CD4-positive, alpha-beta memory T cell (primary cell): ENCODE measurements at regions of chr7 and their contacts with region 1.

Region 1: GRCh38 chr7:136009488-136010079 is 32.4 kb upstream of the MTPN start:
- DNase-seq: peak in 4 of 5 donors; percentile 29 to 59 (median 50)
- H3K4me3 ChIP-seq: no peak overlapping the region
- H3K4me3 Mint-ChIP-seq: no peak overlapping the region
- H3K27ac ChIP-seq: no peak overlapping the region
- H3K27ac Mint-ChIP-seq: no peak overlapping the region
- H3K4me1 ChIP-seq: peaks cover 7% of the 10 kb centered on the region
- H3K4me1 Mint-ChIP-seq: peaks cover 0 to 8% (median 6%) of the 10 kb centered on the region in 4 donors
- H3K27me3 ChIP-seq: no peaks in the 10 kb centered on the region
- H3K27me3 Mint-ChIP-seq: no peaks in the 10 kb centered on the region

Region 2: DNA sequence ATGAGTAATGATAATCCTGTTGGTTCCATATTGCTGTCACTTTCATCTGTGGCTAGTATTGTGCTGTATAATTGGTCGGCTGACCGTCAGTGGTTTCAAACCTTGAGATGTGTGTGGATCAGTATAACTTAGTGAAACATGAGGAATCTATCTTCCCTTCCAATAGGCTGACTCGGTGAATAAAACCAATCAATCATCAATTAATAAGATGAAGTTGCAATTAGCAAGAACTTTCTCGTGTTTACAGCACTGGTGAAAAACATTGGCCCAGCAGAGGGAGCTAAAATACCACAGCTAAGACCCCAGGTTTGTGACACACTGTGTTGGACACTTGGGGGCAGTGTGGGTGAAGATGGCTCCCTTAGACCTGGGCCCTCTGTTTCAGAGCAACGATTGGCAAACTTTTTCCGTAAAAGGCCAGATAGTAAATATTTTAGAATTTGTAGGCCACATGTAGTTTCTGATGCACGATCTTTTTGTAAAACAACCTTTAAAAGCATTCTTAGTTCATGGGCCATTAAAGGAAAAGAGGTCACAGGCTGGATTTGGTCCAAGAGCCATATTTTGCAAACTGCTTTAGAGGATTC is 728.1 kb before region 1 on chr7:
- CTCF ChIA-PET with region 1: no interaction called
- POLR2A ChIA-PET with region 1: no interaction called
- intact Hi-C with region 1: loop called (anchors 2 kb)
- DNase-seq: peak; percentile 77 to 79 (median 78)
- H3K4me3 ChIP-seq: no peak overlapping the region
- H3K4me3 Mint-ChIP-seq: peak overlapping the region in 6 of 8 donors; percentile 16 to 72 (median 36)
- H3K27ac ChIP-seq: no peak overlapping the region
- H3K27ac Mint-ChIP-seq: peak overlapping the region in 4 of 7 donors; percentile 59 to 85 (median 72)
- H3K4me1 ChIP-seq: peaks cover 21% of the 10 kb centered on the region
- H3K4me1 Mint-ChIP-seq: peaks cover 15 to 24% (median 21%) of the 10 kb centered on the region in 4 donors
- H3K27me3 ChIP-seq: no peaks in the 10 kb centered on the region
- H3K27me3 Mint-ChIP-seq: peaks cover 5 to 8% of the 10 kb centered on the region in 2 donors

Region 3: DNA sequence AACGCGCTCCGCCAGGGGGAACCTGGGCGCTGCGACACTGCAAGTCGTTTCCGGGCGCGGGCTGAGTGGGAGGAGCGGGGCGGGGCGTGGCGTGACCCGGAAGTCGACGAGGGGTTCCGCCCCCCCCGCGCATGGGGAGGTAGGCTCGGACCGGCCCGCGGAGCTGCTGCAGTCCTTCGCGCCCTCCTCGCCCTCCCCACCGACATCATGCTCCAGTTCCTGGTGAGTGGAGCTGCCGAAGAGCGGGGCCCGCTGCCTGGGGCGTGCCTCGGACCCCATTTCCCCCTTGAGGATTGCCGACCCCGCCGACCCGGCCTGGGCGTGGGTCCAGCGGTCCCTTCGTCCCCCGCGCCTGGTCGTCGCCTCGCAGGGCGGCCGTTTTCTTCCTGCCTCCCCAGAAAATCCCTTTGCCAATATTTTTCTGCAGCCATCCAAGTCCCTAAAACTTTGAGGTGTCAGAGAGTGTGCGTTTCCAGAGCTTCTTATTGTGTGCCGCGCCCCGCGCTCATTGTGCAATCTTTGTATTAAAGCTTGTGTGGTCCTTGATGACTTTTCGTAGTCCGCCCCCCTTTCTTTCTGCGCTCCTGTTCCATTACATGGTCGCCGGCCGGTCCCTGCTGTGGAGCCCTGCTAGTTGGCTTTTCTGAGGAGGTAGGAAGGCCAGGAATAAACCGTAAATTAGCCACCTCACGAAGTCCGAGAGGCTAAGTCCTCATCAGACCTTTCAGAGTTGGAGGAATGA is 347.0 kb before region 1 on chr7 and contains the start of gene STMP1:
- CTCF ChIA-PET with region 1: interaction called, 4 read pairs
- POLR2A ChIA-PET with region 1: no interaction called
- intact Hi-C with region 1: loop called (anchors 5 kb)
- DNase-seq: peak; percentile 92 to 94 (median 93)
- H3K4me3 ChIP-seq: peak within 1 kb of the TSS; percentile 86 to 98
- H3K4me3 Mint-ChIP-seq: peak within 1 kb of the TSS; percentile 91 to 98 (median 96)
- H3K27ac ChIP-seq: peak within 1 kb of the TSS; percentile 76
- H3K27ac Mint-ChIP-seq: peak within 1 kb of the TSS; percentile 83 to 98 (median 95)
- H3K4me1 ChIP-seq: peaks cover 30% of the 10 kb centered on the region
- H3K4me1 Mint-ChIP-seq: peaks cover 25 to 52% (median 38%) of the 10 kb centered on the region in 4 donors
- H3K27me3 ChIP-seq: no peaks in the 10 kb centered on the region
- H3K27me3 Mint-ChIP-seq: no peaks in the 10 kb centered on the region
- total RNA-seq, gene STMP1: 29.5 to 29.7 TPM

Region 4: GRCh38 chr7:135801045-135801693 is 208.4 kb before region 1 on chr7:
- CTCF ChIA-PET with region 1: interaction called, 187 read pairs
- POLR2A ChIA-PET with region 1: interaction called, 3 read pairs
- intact Hi-C with region 1: loop called (anchors 1 kb)
- DNase-seq: peak; percentile 50 to 69 (median 66)
- H3K4me3 ChIP-seq: no peak overlapping the region
- H3K4me3 Mint-ChIP-seq: peak overlapping the region in 5 of 8 donors; percentile 36 to 75 (median 50)
- H3K27ac ChIP-seq: no peak overlapping the region
- H3K27ac Mint-ChIP-seq: peak overlapping the region in 1 of 7 donors; percentile 76
- H3K4me1 ChIP-seq: peaks cover 7% of the 10 kb centered on the region
- H3K4me1 Mint-ChIP-seq: peaks cover 6 to 17% (median 10%) of the 10 kb centered on the region in 4 donors
- H3K27me3 ChIP-seq: no peaks in the 10 kb centered on the region
- H3K27me3 Mint-ChIP-seq: peaks cover 0 to 2% of the 10 kb centered on the region in 2 donors

Region 5: DNA sequence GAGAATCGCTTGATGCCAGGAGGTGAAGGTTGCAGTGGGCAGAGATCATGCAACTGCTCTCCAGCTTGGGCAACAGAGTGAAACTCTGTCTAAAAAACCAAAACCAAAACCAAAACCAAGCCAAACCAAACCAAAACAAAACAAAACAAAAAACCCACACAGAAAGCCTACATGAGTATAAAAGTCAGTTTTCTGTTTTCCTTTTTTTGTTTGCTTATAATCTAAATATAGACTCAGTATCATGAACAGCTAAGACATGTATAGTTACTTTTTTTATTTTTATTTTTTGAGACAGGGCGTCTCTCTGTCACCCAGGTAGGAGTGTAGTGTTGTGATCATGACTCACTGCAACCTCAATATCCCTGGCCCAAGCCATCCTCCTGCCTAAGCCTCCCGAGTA is 15.6 kb before region 1 on chr7:
- CTCF ChIA-PET with region 1: interaction called, 29 read pairs
- POLR2A ChIA-PET with region 1: no interaction called
- intact Hi-C with region 1: no loop called
- DNase-seq: peak in 2 of 5 donors; percentile 13 to 28
- H3K4me3 ChIP-seq: no peak overlapping the region
- H3K4me3 Mint-ChIP-seq: peak overlapping the region in 5 of 8 donors; percentile 9 to 65 (median 49)
- H3K27ac ChIP-seq: no peak overlapping the region
- H3K27ac Mint-ChIP-seq: peak overlapping the region in 6 of 7 donors; percentile 27 to 81 (median 75)
- H3K4me1 ChIP-seq: peaks cover 28% of the 10 kb centered on the region
- H3K4me1 Mint-ChIP-seq: peaks cover 13 to 30% (median 22%) of the 10 kb centered on the region in 4 donors
- H3K27me3 ChIP-seq: no peaks in the 10 kb centered on the region
- H3K27me3 Mint-ChIP-seq: no peaks in the 10 kb centered on the region

Region 6: DNA sequence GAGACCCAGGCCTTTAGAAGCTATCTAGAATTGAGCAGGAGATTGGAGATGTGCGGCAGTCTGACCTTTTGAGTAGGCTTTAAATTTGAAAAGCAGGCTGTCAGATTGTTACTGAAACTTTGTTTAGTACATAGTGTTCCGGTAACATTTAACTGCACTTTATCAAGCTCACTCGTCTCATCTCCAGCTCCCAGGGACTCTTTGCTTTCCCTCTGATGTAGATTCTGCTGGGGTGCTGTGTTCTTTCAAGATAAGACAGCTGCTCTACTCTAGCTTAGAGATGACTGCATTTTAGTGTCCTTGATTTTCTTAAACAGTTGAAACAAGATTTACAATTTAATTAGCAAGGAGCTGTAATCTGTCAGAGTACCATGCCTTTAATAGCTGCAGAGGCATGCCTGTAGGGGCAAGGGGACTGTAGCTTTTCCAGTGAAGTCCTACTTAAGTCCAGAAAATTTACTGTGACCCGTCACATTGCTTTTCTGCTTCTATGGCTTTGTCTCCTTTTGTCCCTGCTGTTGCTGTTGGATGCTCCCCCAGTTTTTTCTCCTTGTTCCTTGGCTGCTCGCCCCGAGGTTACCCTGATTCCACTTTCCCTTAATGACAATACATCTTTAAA is 23.9 kb after region 1 on chr7:
- CTCF ChIA-PET with region 1: no interaction called
- POLR2A ChIA-PET with region 1: no interaction called
- intact Hi-C with region 1: no loop called
- DNase-seq: no peak
- H3K4me3 ChIP-seq: no peak overlapping the region
- H3K4me3 Mint-ChIP-seq: no peak overlapping the region
- H3K27ac ChIP-seq: no peak overlapping the region
- H3K27ac Mint-ChIP-seq: no peak overlapping the region
- H3K4me1 ChIP-seq: no peaks in the 10 kb centered on the region
- H3K4me1 Mint-ChIP-seq: peaks cover 0 to 11% (median 5%) of the 10 kb centered on the region in 4 donors
- H3K27me3 ChIP-seq: no peaks in the 10 kb centered on the region
- H3K27me3 Mint-ChIP-seq: no peaks in the 10 kb centered on the region